A549 (cell line): ENCODE measurements at regions of chr9 and their contacts with region 1.

Region 1: DNA sequence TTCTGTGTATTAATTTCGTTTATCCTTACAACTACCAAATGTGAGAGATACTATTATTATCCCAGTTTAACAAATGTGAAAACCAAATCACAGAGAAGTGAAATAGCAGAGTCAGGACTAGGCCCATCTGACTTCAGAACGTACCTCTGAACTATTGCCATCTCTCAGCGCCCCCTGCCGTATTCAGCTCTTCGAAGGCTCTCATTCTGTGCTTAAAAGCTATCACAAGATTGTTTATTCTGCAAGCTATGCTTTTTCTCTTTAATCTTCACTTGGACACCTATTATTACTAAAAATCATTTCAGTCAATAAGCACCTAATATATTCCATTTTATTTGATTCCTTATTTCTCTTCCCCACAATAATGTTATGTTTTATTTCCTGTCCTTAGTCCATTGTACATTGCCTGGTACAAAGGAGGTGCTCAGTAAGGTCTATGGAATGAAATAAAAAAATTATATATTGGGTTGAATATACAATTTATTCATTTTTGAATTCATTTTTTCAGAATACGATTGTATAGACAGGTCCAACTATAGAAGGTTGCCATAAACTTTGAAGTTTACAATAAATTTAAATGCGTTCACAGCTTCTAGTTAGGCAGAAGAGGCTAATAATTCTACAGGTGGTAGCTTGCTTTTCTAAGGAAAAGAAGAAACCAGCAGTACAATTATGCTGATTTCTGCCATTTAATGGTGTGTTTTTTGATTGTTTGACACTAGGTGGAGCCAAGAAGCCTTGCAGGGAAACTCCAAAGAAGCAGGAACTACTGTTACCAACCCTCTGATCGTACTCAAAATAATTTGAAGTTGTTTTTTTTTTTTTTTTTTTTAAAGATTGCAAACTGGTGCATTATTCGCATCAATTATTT is 202.2 kb upstream of the DMRTA1 start:
- DNase-seq: peak; percentile 18 to 71
- ATAC-seq: peak; percentile 86 to 96
- H3K4me3 ChIP-seq: no peak overlapping the region
- H3K27ac ChIP-seq: peak overlapping the region; percentile 28 to 64; a peak in 5 of 6 replicates
- H3K4me1 ChIP-seq: peaks cover 34% of the 10 kb centered on the region
- CTCF ChIP-seq: peak; percentile 54
- EP300 ChIP-seq: no peak
- POLR2A ChIP-seq: no peak
- RAD21 ChIP-seq: peak; percentile 66 to 69

Region 2: GRCh38 chr9:21825637-21826036 is 418.7 kb before region 1 on chr9:
- CTCF ChIA-PET with region 1: interaction called, 345 read pairs
- POLR2A ChIA-PET with region 1: no interaction called
- DNase-seq: no peak
- ATAC-seq: no peak
- H3K4me3 ChIP-seq: no peak overlapping the region
- H3K27ac ChIP-seq: peak overlapping the region in 1 of 2 experiments; percentile 60; a peak in 4 of 6 replicates
- H3K4me1 ChIP-seq: peaks cover 41% of the 10 kb centered on the region
- CTCF ChIP-seq: no peak
- EP300 ChIP-seq: no peak
- POLR2A ChIP-seq: no peak
- RAD21 ChIP-seq: no peak

Region 3: GRCh38 chr9:22105005-22105722 is 139.2 kb before region 1 on chr9:
- CTCF ChIA-PET with region 1: no interaction called
- POLR2A ChIA-PET with region 1: no interaction called
- DNase-seq: no peak
- ATAC-seq: no peak
- H3K4me3 ChIP-seq: no peak overlapping the region
- H3K27ac ChIP-seq: no peak overlapping the region
- H3K4me1 ChIP-seq: no peaks in the 10 kb centered on the region
- CTCF ChIP-seq: no peak
- EP300 ChIP-seq: no peak
- POLR2A ChIP-seq: no peak
- RAD21 ChIP-seq: no peak

Region 4: GRCh38 chr9:22147813-22148524 is 96.4 kb before region 1 on chr9:
- CTCF ChIA-PET with region 1: interaction called, 11 read pairs
- POLR2A ChIA-PET with region 1: interaction called, 3 read pairs
- DNase-seq: peak in 1 of 2 experiments; percentile 90
- ATAC-seq: peak; percentile 96 to 99
- H3K4me3 ChIP-seq: no peak overlapping the region; the same call in 2 of the 3 replicates
- H3K27ac ChIP-seq: peak overlapping the region; percentile 80 to 87
- H3K4me1 ChIP-seq: peaks cover 66% of the 10 kb centered on the region
- CTCF ChIP-seq: no peak
- EP300 ChIP-seq: peak; percentile 80 to 87; a peak in 4 of 5 replicates
- POLR2A ChIP-seq: no peak
- RAD21 ChIP-seq: peak; percentile 9 to 25; a peak in 1 of 5 replicates

Region 5: DNA sequence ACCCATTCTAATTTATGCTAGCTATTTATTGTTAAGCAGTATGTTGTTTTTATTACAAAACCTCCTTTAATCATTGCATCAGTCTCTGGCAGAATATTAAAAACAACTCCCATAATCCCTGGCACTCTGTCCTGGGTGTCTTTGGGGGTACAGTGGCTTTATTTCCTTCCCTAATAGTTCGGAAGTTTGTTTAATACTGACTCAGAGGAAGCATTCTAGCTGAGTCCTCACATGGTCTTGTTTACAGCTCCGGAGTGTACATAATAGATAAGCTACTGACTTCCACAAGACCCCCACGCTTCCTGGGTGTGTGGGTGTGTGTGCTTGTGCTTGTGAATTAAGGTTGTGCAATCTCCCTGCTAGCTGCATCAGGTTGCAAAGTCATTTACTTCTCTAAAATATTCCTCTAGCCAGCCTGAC is 85.4 kb before region 1 on chr9:
- CTCF ChIA-PET with region 1: interaction called, 15 read pairs
- POLR2A ChIA-PET with region 1: no interaction called
- DNase-seq: peak in 1 of 2 experiments; percentile 94
- ATAC-seq: peak; percentile 90 to 97
- H3K4me3 ChIP-seq: peak overlapping the region; percentile 18; the same call in 1 of the 3 replicates
- H3K27ac ChIP-seq: peak overlapping the region; percentile 89 to 90
- H3K4me1 ChIP-seq: peaks cover 57% of the 10 kb centered on the region
- CTCF ChIP-seq: no peak
- EP300 ChIP-seq: peak; percentile 99
- POLR2A ChIP-seq: no peak
- RAD21 ChIP-seq: peak; percentile 17 to 68; a peak in 4 of 5 replicates

Region 6: GRCh38 chr9:22165144-22165543 is 79.2 kb before region 1 on chr9:
- CTCF ChIA-PET with region 1: interaction called, 15 read pairs
- POLR2A ChIA-PET with region 1: no interaction called
- DNase-seq: no peak
- ATAC-seq: peak in 1 of 2 experiments; percentile 29; a peak in 2 of 6 replicates
- H3K4me3 ChIP-seq: no peak overlapping the region
- H3K27ac ChIP-seq: peak overlapping the region; percentile 79 to 82
- H3K4me1 ChIP-seq: peaks cover 56% of the 10 kb centered on the region
- CTCF ChIP-seq: no peak
- EP300 ChIP-seq: no peak
- POLR2A ChIP-seq: no peak
- RAD21 ChIP-seq: no peak

Region 7: DNA sequence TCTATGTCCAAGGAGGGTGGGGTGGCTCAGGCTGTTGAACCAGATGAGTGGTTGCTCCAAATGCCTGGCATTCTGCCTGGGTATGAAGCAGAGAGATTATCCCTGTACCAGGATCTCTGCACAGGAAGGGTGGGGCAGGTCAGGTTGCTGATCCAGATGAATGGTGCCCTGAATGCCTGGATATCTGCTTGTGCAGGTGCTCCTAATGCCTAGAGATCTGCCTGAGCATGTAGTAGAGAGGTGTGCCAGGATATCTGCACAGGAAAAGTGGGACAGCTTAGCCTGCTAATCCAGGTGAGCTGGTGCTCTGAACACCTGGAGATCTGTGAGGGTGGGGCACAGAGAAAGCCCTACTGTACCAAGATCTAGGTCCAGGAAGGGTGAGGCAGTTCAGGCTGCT is 12.7 kb after region 1 on chr9:
- CTCF ChIA-PET with region 1: interaction called, 15 read pairs
- POLR2A ChIA-PET with region 1: no interaction called
- DNase-seq: no peak
- ATAC-seq: no peak
- H3K4me3 ChIP-seq: no peak overlapping the region
- H3K27ac ChIP-seq: no peak overlapping the region
- H3K4me1 ChIP-seq: no peaks in the 10 kb centered on the region
- CTCF ChIP-seq: no peak
- EP300 ChIP-seq: no peak
- POLR2A ChIP-seq: no peak
- RAD21 ChIP-seq: no peak

Region 8: DNA sequence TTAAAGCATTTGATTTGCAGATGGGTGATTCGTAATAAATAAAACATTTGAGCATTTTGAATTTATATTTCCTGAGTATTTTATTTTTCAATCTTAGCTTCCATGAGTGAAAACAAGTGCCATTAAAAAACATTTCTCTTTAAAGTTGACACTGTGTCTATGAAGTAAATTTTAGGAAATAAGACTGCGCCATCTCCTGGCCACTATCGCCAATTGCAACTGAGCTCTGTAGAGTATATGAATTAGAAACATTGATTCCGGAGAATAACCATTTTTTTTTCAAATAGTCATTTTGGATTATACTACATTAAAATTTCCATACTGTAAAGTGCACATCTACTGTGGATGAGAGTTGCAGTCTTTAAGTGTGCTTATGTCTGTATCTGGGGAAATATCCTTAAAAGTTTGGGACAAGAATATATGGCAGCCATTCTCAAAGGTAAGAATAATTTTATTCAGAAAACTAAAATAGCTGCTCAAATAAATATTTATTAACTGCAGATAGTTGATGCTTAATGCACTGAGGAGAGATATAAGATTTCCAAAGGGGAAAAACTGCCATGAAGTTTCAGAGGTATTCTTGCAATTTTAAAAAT is 208.1 kb after region 1 on chr9:
- CTCF ChIA-PET with region 1: interaction called, 17 read pairs
- POLR2A ChIA-PET with region 1: interaction called, 9 read pairs
- DNase-seq: peak; percentile 6 to 38
- ATAC-seq: peak in 1 of 2 experiments; percentile 66; a peak in 3 of 6 replicates
- H3K4me3 ChIP-seq: no peak overlapping the region
- H3K27ac ChIP-seq: no peak overlapping the region
- H3K4me1 ChIP-seq: peaks cover 20% of the 10 kb centered on the region; the same call in 2 of the 3 replicates
- CTCF ChIP-seq: peak; percentile 94
- EP300 ChIP-seq: no peak
- POLR2A ChIP-seq: no peak
- RAD21 ChIP-seq: peak; percentile 82 to 87